Breast epithelium (tissue), 4 donors: ENCODE measurements at regions of chrX and their contacts with region 1.

Region 1: GRCh38 chrX:40415675-40416074 is 165.1 kb upstream of the ATP6AP2 start:
- DNase-seq: peak; percentile 52 to 58
- H3K4me3 ChIP-seq: no peak overlapping the region
- H3K27ac ChIP-seq: peak overlapping the region in 1 of 2 donors; percentile 12
- H3K4me1 ChIP-seq: no peaks in the 10 kb centered on the region
- H3K27me3 ChIP-seq: peaks cover 0 to 66% of the 10 kb centered on the region in 2 donors
- CTCF ChIP-seq: no peak
- POLR2A ChIP-seq: no peak

Region 2: DNA sequence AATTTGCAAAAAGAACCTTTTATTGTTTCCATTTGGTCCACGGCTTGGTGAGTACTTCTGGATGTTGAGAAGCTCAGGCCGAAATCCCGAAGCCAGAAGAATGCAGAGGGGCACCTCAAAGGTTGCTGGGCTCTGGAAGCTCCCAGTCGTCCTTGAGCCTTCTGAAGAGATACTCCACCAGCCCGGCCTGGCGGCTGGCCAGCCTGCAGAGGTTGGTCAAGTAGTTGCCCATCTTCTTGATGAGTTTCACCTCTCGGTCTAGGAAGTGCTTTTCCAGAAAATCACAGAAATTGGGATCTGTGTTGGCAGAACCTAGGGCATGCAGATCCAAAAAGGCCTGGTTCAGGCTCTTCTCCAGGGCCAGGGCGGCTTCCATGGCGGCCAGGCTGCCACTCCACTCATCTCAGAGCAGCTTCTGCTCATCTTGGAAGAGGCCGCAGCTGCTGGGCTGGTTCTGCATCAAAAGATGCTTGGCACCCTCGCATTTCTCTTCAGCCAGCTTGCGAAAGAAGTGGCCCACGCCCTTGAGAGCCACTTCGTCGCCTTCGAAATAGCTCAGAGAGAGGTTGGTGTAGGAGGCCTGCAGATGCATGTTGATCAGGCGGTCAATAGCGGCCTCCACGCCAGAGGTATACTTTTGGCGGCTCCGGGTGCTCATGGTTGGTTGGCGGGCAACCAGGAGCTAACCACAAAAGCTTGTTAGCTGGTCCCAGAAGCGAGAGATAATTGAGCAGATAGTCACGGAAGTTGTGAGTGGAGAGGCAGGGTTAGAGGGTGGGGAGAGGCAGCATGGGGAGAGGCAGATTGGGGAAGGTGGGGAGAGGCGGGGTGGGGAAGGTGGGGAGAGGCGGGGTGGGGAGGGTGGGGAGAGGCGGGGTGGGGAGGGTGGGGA is 1930.8 kb before region 1 on chrX:
- intact Hi-C with region 1: no loop called
- DNase-seq: no peak
- H3K4me3 ChIP-seq: no peak overlapping the region
- H3K27ac ChIP-seq: no peak overlapping the region
- H3K4me1 ChIP-seq: no peaks in the 10 kb centered on the region
- H3K27me3 ChIP-seq: peaks cover 0 to 35% of the 10 kb centered on the region in 2 donors
- CTCF ChIP-seq: no peak
- POLR2A ChIP-seq: no peak

Region 3: DNA sequence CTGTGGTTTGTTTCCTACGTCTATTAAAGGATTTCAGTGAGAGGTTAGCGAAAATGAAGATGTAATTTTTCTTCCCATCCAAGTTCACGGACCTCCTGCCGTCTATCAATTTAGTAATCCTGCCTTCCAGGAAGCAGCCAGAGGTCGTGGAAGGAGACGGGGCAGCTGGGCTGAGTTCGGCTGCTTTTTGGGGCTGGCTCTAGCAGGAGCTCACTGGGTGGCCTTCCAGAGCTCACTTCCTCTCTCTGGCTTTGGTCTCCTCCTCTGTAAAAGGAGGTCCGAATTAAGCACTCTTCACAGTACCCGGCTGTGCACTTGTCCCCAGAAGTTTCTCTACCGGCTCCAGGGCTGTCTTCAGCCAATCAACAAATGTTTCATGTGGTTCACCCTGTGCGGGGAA is 613.3 kb before region 1 on chrX:
- intact Hi-C with region 1: no loop called
- DNase-seq: no peak
- H3K4me3 ChIP-seq: no peak overlapping the region
- H3K27ac ChIP-seq: no peak overlapping the region
- H3K4me1 ChIP-seq: no peaks in the 10 kb centered on the region
- H3K27me3 ChIP-seq: peaks cover 0 to 50% of the 10 kb centered on the region in 2 donors
- CTCF ChIP-seq: no peak
- POLR2A ChIP-seq: no peak

Region 4: DNA sequence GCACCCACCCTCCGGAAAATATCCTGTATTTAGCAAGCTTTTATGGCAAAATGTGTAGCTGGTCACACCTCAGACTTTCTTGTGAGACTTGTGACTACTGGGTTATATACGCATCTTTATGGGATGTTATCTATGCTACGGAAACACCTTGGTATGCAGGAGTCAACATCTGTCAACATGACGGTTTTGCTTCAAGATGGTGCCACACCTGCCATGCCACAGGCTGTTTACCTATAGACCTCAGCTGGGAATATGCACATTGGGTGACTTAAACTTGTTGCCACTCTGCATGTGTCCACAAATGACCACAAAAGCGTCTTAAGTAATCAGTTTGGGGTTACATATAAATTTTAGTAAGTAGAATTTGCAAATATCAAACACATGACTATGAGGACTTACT is 27.2 kb before region 1 on chrX:
- intact Hi-C with region 1: loop called (anchors 1 kb)
- DNase-seq: no peak
- H3K4me3 ChIP-seq: no peak overlapping the region
- H3K27ac ChIP-seq: peak overlapping the region in 1 of 2 donors; percentile 17
- H3K4me1 ChIP-seq: no peaks in the 10 kb centered on the region
- H3K27me3 ChIP-seq: peaks cover 0 to 36% of the 10 kb centered on the region in 2 donors
- CTCF ChIP-seq: no peak
- POLR2A ChIP-seq: no peak

Region 5: DNA sequence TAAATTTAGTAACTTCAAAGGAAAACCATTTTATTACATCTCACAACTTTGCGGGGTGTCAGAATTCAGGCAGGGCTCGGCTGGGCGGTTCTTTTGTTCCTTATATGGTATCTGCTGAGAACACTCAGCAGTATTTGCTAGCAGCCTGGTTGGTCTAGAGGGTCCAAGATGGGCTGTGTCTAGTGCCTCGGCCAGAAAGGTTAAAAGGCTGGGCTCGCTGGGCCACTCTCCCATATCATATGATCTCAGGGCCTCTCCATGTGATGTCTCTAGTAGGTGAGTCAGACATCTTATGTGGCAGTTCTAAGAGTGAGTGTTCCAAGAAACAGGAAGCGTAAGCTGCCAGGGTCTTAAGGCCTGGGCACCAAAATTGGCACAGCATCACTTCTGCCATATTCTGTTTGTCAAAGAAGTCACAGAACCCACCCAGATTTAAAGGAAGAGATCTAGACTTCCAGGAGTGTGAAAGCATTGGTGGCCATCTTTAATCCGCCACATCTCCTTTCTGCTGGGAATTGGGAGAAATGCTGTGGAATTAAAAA is 64.2 kb after region 1 on chrX:
- intact Hi-C with region 1: loop called (anchors 2 kb)
- DNase-seq: no peak
- H3K4me3 ChIP-seq: no peak overlapping the region
- H3K27ac ChIP-seq: no peak overlapping the region
- H3K4me1 ChIP-seq: no peaks in the 10 kb centered on the region
- H3K27me3 ChIP-seq: peaks cover 0 to 87% of the 10 kb centered on the region in 2 donors
- CTCF ChIP-seq: no peak
- POLR2A ChIP-seq: no peak